Breast epithelium (tissue), 4 donors: ENCODE measurements at regions of chr20 and their contacts with region 1.

Region 1: DNA sequence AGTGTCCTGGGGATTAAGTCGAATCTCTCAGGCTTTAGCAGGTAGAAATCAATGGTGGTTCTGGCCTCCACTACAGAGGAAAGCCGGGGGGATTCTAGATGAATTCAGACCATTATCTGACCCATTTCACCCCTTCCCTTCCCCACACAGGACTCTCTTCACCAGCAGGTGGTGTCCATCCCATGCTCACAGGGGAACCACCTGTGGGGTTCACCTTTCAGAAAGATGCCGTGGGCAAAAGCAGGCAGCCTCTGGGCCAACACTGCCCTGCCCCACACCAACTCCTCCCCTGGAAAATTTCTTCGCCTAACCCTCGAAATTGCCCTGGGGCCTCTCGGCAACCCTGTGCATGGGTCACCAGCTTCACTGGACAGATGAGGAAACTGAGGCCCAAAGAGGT is 123.8 kb upstream of the GGTLC1 start:
- DNase-seq: no peak
- H3K4me3 ChIP-seq: no peak overlapping the region
- H3K27ac ChIP-seq: no peak overlapping the region
- H3K4me1 ChIP-seq: no peaks in the 10 kb centered on the region
- H3K27me3 ChIP-seq: peaks cover 0 to 3% of the 10 kb centered on the region in 2 donors
- CTCF ChIP-seq: no peak
- POLR2A ChIP-seq: no peak

Region 2: GRCh38 chr20:24134284-24134683 is 21.9 kb after region 1 on chr20:
- intact Hi-C with region 1: no loop called
- DNase-seq: no peak
- H3K4me3 ChIP-seq: no peak overlapping the region
- H3K27ac ChIP-seq: no peak overlapping the region
- H3K4me1 ChIP-seq: no peaks in the 10 kb centered on the region
- H3K27me3 ChIP-seq: no peaks in the 10 kb centered on the region
- CTCF ChIP-seq: no peak
- POLR2A ChIP-seq: no peak

Region 3: GRCh38 chr20:24823989-24824693 is 711.7 kb after region 1 on chr20:
- intact Hi-C with region 1: loop called (anchors 5 kb)
- DNase-seq: no peak
- H3K4me3 ChIP-seq: no peak overlapping the region
- H3K27ac ChIP-seq: no peak overlapping the region
- H3K4me1 ChIP-seq: no peaks in the 10 kb centered on the region
- H3K27me3 ChIP-seq: no peaks in the 10 kb centered on the region
- CTCF ChIP-seq: no peak
- POLR2A ChIP-seq: no peak

Region 4: GRCh38 chr20:24948939-24949679 is 836.7 kb after region 1 on chr20 and contains the start of gene CST7:
- intact Hi-C with region 1: no loop called
- DNase-seq: no peak
- H3K4me3 ChIP-seq: peak within 1 kb of the TSS; percentile 8 to 26 (median 9)
- H3K27ac ChIP-seq: peak within 1 kb of the TSS in 1 of 2 donors; percentile 19
- H3K4me1 ChIP-seq: no peaks in the 10 kb centered on the region
- H3K27me3 ChIP-seq: peaks cover 0 to 3% of the 10 kb centered on the region in 2 donors
- CTCF ChIP-seq: no peak
- POLR2A ChIP-seq: no peak
- total RNA-seq, gene CST7: 0.33 to 2.5 (median 1.8) TPM